ENCODE measurements at regions of chr22 and their contacts with region 1.

Region 1: GRCh38 chr22:30289134-30289979 is at the start of gene CASTOR1:
- DNase-seq: peak; percentile 83 to 91 (median 89)
- H3K4me3 ChIP-seq: peak within 1 kb of the TSS; percentile 70
- H3K4me3 Mint-ChIP-seq: peak within 1 kb of the TSS; percentile 87 to 95 (median 90)
- H3K27ac ChIP-seq: peak within 1 kb of the TSS; percentile 51
- H3K27ac Mint-ChIP-seq: peak within 1 kb of the TSS; percentile 89 to 97 (median 94)
- H3K4me1 ChIP-seq: peaks cover 33% of the 10 kb centered on the region
- H3K4me1 Mint-ChIP-seq: peaks cover 23 to 43% (median 26%) of the 10 kb centered on the region in 3 donors
- H3K27me3 ChIP-seq: no peaks in the 10 kb centered on the region
- H3K27me3 Mint-ChIP-seq: peaks cover 0 to 1% of the 10 kb centered on the region in 2 donors
- total RNA-seq, gene CASTOR1: 4.0 to 5.3 TPM

Region 2: GRCh38 chr22:30104501-30105156 is 184.7 kb before region 1 on chr22:
- CTCF ChIA-PET with region 1: interaction called, 25 read pairs
- POLR2A ChIA-PET with region 1: no interaction called
- DNase-seq: peak in 1 of 5 donors; percentile 8
- H3K4me3 ChIP-seq: no peak overlapping the region
- H3K4me3 Mint-ChIP-seq: no peak overlapping the region
- H3K27ac ChIP-seq: no peak overlapping the region
- H3K27ac Mint-ChIP-seq: no peak overlapping the region
- H3K4me1 ChIP-seq: peaks cover 16% of the 10 kb centered on the region
- H3K4me1 Mint-ChIP-seq: peaks cover 8 to 25% (median 15%) of the 10 kb centered on the region in 3 donors
- H3K27me3 ChIP-seq: no peaks in the 10 kb centered on the region
- H3K27me3 Mint-ChIP-seq: peaks cover 0 to 6% of the 10 kb centered on the region in 2 donors

Region 3: GRCh38 chr22:30169002-30169401 is 120.4 kb before region 1 on chr22:
- CTCF ChIA-PET with region 1: no interaction called
- POLR2A ChIA-PET with region 1: no interaction called
- DNase-seq: peak in 1 of 5 donors; percentile 56
- H3K4me3 ChIP-seq: no peak overlapping the region
- H3K4me3 Mint-ChIP-seq: no peak overlapping the region
- H3K27ac ChIP-seq: no peak overlapping the region
- H3K27ac Mint-ChIP-seq: no peak overlapping the region
- H3K4me1 ChIP-seq: peaks cover 25% of the 10 kb centered on the region
- H3K4me1 Mint-ChIP-seq: no peaks in the 10 kb centered on the region
- H3K27me3 ChIP-seq: no peaks in the 10 kb centered on the region
- H3K27me3 Mint-ChIP-seq: no peaks in the 10 kb centered on the region

Region 4: DNA sequence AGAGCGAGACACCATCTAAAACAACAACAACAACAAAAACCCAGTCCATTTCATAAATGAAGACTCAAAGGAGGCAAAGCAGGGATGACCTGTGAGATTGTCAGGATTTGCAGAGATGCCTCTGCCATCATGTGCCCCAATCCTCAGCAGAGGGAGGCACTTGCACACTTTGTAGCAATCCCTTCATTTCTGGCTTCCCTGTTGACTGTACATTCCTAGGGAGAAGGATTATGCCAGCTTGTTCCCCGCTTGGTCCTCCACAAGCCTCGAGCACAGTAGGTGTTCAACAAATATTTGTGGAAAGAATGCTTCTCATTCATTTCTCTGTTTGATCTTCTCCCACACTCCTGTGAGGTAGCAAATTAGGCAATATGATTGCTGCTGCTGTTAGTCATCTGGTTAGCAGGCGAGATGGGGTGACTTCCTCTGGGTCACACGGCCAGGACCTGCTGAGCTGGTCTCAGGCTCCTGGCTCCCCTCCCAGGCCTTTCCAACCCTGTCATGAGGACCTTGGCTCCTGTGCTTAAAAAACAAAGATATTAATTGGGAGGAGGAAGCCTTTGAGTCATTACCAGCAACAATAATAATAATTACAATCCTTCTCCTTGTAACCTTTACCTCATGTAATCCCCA is 76.9 kb before region 1 on chr22:
- CTCF ChIA-PET with region 1: no interaction called
- POLR2A ChIA-PET with region 1: no interaction called
- DNase-seq: no peak
- H3K4me3 ChIP-seq: no peak overlapping the region
- H3K4me3 Mint-ChIP-seq: no peak overlapping the region
- H3K27ac ChIP-seq: no peak overlapping the region
- H3K27ac Mint-ChIP-seq: peak overlapping the region in 4 of 8 donors; percentile 6 to 53 (median 40)
- H3K4me1 ChIP-seq: no peaks in the 10 kb centered on the region
- H3K4me1 Mint-ChIP-seq: peaks cover 0 to 13% (median 10%) of the 10 kb centered on the region in 3 donors
- H3K27me3 ChIP-seq: no peaks in the 10 kb centered on the region
- H3K27me3 Mint-ChIP-seq: peaks cover 0 to 1% of the 10 kb centered on the region in 2 donors

Region 5: DNA sequence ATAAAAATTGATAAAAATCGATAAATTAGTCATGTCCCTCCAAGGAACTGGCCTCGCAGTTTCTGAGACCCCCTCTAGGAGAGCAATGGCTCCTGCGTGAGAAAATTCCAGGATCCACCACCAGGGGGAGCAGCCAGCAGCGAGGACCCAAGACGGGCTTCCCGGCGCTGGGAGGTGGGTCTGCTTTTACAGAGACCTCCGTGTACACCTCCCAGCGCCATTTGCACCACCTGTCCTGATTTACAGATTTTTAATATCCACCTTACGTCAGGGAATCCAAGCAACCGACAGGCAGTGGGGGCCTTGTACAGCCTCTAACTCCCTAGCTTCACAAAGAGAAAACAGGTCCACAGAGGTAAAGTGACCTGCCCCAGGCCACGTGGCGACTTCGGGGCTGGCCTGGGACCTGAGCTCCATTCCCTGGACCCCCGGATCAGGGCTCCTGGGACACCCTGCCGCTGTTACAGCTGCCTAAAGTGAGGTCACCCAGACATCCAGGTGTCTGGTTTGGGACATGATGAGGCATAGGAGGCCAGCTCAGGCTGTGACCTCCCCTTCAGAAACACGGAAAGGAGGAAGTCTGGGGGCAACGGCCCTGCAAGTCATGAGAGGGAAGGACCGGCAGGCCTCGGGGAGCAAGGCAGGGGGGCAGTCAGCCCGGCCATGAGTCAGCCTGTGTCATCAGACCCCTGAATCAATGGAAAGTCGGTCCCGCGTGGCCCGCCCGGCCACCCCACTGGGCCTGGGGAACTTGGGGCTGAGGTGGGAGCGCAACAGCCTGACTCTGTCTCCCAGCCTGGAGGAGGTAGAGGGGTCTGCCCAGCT is 26.2 kb before region 1 on chr22:
- CTCF ChIA-PET with region 1: interaction called, 82 read pairs
- POLR2A ChIA-PET with region 1: interaction called, 3 read pairs
- DNase-seq: peak; percentile 64 to 84 (median 74)
- H3K4me3 ChIP-seq: peak overlapping the region; percentile 7
- H3K4me3 Mint-ChIP-seq: peak overlapping the region; percentile 37 to 81 (median 63)
- H3K27ac ChIP-seq: no peak overlapping the region
- H3K27ac Mint-ChIP-seq: peak overlapping the region in 7 of 8 donors; percentile 45 to 93 (median 82)
- H3K4me1 ChIP-seq: peaks cover 38% of the 10 kb centered on the region
- H3K4me1 Mint-ChIP-seq: peaks cover 36 to 46% (median 44%) of the 10 kb centered on the region in 3 donors
- H3K27me3 ChIP-seq: no peaks in the 10 kb centered on the region
- H3K27me3 Mint-ChIP-seq: peaks cover 0 to 1% of the 10 kb centered on the region in 2 donors

Region 6: GRCh38 chr22:30314915-30315314 is 25.6 kb after region 1 on chr22:
- CTCF ChIA-PET with region 1: interaction called, 98 read pairs
- POLR2A ChIA-PET with region 1: interaction called, 9 read pairs
- DNase-seq: peak in 4 of 5 donors; percentile 24 to 65 (median 44)
- H3K4me3 ChIP-seq: no peak overlapping the region
- H3K4me3 Mint-ChIP-seq: peak overlapping the region in 4 of 7 donors; percentile 8 to 65 (median 25)
- H3K27ac ChIP-seq: no peak overlapping the region
- H3K27ac Mint-ChIP-seq: peak overlapping the region; percentile 26 to 96 (median 88)
- H3K4me1 ChIP-seq: peaks cover 100% of the 10 kb centered on the region
- H3K4me1 Mint-ChIP-seq: peaks cover 95 to 100% (median 98%) of the 10 kb centered on the region in 3 donors
- H3K27me3 ChIP-seq: no peaks in the 10 kb centered on the region
- H3K27me3 Mint-ChIP-seq: peaks cover 0 to 1% of the 10 kb centered on the region in 2 donors

Region 7: DNA sequence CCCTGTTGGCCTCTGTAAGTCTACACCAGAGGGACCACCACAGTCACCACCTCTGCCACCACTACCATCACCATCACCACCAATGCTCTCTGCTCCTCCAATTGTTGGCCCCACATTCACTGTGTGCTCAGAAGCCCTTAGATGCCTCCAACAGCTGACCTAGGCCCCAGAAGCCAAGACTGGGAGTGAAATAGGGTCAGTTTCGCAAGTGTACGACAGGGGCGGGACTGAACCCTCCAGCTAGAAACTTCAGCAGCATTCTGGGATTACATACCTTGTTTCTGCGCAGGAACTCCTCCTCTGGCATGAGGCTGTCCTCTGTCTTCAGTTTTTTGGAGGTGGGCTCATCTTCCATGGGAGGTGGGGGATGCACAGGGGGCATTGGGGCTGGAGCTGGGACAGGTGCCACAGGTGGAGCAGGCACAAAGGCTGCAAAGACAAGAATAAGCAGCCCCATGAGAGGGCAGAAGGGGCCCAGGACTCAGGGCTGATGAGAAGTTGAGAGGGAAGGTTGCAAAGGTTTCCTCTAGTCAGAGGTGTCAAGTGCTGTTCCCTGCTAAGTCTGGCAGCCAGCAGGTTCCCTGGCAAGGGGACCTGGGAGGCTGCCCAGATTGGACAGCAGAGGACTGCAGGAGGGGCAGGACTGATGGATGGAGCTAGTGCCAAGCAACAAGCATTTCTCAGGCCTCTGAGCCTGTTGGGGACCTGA is 47.5 kb after region 1 on chr22:
- CTCF ChIA-PET with region 1: interaction called, 22 read pairs
- POLR2A ChIA-PET with region 1: no interaction called
- DNase-seq: no peak
- H3K4me3 ChIP-seq: no peak overlapping the region
- H3K4me3 Mint-ChIP-seq: no peak overlapping the region
- H3K27ac ChIP-seq: no peak overlapping the region
- H3K27ac Mint-ChIP-seq: peak overlapping the region in 3 of 8 donors; percentile 11 to 29 (median 22)
- H3K4me1 ChIP-seq: no peaks in the 10 kb centered on the region
- H3K4me1 Mint-ChIP-seq: no peaks in the 10 kb centered on the region
- H3K27me3 ChIP-seq: no peaks in the 10 kb centered on the region
- H3K27me3 Mint-ChIP-seq: no peaks in the 10 kb centered on the region

Region 8: GRCh38 chr22:30356449-30357235 is 67.3 kb after region 1 on chr22 and contains the starts of genes CCDC157 and SF3A1:
- CTCF ChIA-PET with region 1: interaction called, 42 read pairs
- POLR2A ChIA-PET with region 1: interaction called, 48 read pairs
- DNase-seq: peak; percentile 81 to 89 (median 88)
- H3K4me3 ChIP-seq: peak within 1 kb of the TSS; percentile 96
- H3K4me3 Mint-ChIP-seq: peak within 1 kb of the TSS; percentile 94 to 99 (median 98)
- H3K27ac ChIP-seq: peak within 1 kb of the TSS; percentile 98
- H3K27ac Mint-ChIP-seq: peak within 1 kb of the TSS; percentile 91 to 99 (median 96)
- H3K4me1 ChIP-seq: peaks cover 41% of the 10 kb centered on the region
- H3K4me1 Mint-ChIP-seq: peaks cover 46 to 57% (median 57%) of the 10 kb centered on the region in 3 donors
- H3K27me3 ChIP-seq: no peaks in the 10 kb centered on the region
- H3K27me3 Mint-ChIP-seq: peaks cover 0 to 3% of the 10 kb centered on the region in 2 donors
- total RNA-seq, gene CCDC157: 2.7 to 2.9 TPM
- total RNA-seq, gene SF3A1: 235 to 241 TPM

Region 9: GRCh38 chr22:30423982-30424963 is 134.9 kb after region 1 on chr22:
- CTCF ChIA-PET with region 1: interaction called, 30 read pairs
- POLR2A ChIA-PET with region 1: interaction called, 9 read pairs
- DNase-seq: peak; percentile 96 to 100 (median 98)
- H3K4me3 ChIP-seq: peak overlapping the region; percentile 73
- H3K4me3 Mint-ChIP-seq: peak overlapping the region; percentile 91 to 98 (median 97)
- H3K27ac ChIP-seq: peak overlapping the region; percentile 84
- H3K27ac Mint-ChIP-seq: peak overlapping the region; percentile 93 to 99 (median 98)
- H3K4me1 ChIP-seq: peaks cover 44% of the 10 kb centered on the region
- H3K4me1 Mint-ChIP-seq: peaks cover 51 to 66% (median 62%) of the 10 kb centered on the region in 3 donors
- H3K27me3 ChIP-seq: no peaks in the 10 kb centered on the region
- H3K27me3 Mint-ChIP-seq: no peaks in the 10 kb centered on the region

Measured in CD8-positive, alpha-beta memory T cell (primary cell).